Gastrocnemius medialis (tissue), 4 donors: ENCODE measurements at regions of chr3 and their contacts with region 1.

Region 1: DNA sequence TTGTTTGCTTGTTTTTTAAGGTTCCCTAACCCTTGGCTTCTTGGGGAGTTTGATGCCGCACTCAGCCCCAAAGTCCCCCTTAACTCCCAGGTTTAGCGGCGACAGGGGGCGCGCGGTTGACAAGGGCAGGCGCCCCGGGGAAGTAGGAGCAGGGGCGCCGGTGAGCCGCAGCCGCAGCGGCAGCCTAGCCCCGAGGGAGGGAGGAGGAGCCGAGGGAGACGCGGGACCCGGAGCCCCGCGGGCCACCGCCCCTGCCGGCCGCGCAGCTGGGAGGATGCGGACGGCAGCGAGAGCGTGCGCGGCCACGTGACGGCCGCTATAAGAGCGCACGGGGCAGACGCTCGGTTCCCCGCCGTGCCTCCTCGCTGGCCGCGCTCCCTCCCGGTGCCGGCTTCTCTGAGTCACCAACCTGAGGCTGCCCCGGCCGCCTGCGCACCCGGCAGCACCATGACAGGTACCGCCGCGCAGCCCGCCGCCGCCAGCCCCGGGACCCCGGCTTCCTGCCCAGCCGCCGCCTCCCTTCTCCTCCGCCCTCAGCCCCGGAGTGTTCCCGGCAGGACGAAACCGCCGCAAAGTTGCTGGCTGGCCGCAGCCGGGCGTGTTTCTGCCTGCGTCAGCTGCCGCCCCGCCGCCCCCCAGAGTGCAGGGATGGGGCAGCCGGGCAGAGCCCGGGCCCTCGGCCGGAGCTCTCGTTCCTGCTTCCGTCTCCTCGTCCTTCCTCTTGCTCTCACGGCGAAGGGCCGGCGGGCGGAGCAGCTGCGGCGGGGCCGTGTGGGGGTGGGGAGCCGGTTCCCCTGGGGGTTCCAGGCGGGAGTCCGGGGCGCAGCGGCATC is at the start of gene GYG1:
- DNase-seq: peak; percentile 81 to 89
- ATAC-seq: peak; percentile 74 to 75
- H3K4me3 ChIP-seq: peak within 1 kb of the TSS; percentile 77 to 99 (median 96)
- H3K27ac ChIP-seq: peak within 1 kb of the TSS; percentile 98 to 100 (median 100)
- H3K4me1 ChIP-seq: peaks cover 17 to 25% of the 10 kb centered on the region in 2 donors
- H3K27me3 ChIP-seq: no peaks in the 10 kb centered on the region
- CTCF ChIP-seq: peak in 4 of 5 experiments; percentile 23 to 53 (median 35)
- POLR2A ChIP-seq: peak; percentile 98 to 99
- total RNA-seq, gene GYG1: 298 to 526 (median 331) TPM

Region 2: DNA sequence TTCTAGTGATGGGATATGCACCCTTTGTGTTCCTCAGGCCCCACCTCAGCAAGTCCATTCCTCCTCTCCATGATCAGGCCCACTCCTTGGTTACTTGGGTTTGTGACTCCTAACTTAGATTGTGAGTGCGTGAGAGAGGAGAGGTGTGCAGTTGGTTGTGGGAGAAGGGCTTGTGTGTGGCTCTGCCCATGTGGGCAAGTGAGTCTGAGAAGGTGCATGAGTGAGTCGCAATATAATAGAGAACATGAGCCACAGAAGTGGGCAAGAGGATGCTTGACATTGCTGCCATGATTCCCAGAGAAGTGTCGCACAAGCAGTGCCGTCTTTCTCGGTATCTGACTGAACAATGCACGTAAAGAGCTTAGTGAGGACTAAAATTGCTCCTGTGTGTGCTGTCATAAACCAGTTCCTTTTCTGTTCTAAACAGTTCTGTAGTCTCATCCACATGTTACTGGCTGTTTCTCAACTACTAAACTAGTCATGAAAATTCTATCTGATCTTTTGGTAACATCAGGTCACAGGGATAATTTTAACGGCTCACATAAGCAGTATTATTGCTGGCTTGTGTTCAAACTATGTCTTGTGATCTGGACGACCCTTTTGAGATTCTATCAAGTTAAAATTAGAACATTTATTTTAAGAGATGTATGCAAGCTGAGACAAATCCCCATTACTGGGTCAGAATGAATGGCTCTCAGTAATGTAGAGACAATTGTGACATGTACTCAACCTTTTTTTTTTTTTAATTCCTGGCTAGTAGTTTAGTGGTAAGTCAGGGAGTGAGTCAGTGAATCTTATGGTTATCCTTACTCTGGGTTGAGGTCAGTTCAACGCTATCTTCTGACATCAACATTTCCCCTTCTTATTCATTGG is 25.5 kb after region 1 on chr3:
- in situ Hi-C with region 1: no loop called
- intact Hi-C with region 1: loop called (anchors 1 kb)
- DNase-seq: peak in 1 of 2 donors; percentile 45
- ATAC-seq: peak; percentile 73 to 76
- H3K4me3 ChIP-seq: peak overlapping the region in 1 of 4 donors; percentile 5
- H3K27ac ChIP-seq: peak overlapping the region; percentile 98 to 100 (median 100)
- H3K4me1 ChIP-seq: peaks cover 85 to 88% of the 10 kb centered on the region in 2 donors
- H3K27me3 ChIP-seq: no peaks in the 10 kb centered on the region
- CTCF ChIP-seq: no peak
- POLR2A ChIP-seq: peak in 1 of 2 donors; percentile 67

Region 3: GRCh38 chr3:149339931-149340309 is 348.5 kb after region 1 on chr3:
- in situ Hi-C with region 1: no loop called
- intact Hi-C with region 1: no loop called
- DNase-seq: peak; percentile 47 to 80
- ATAC-seq: peak; percentile 93 to 94
- H3K4me3 ChIP-seq: peak overlapping the region in 1 of 4 donors; percentile 1
- H3K27ac ChIP-seq: peak overlapping the region; percentile 63 to 81 (median 71)
- H3K4me1 ChIP-seq: peaks cover 0 to 22% of the 10 kb centered on the region in 2 donors
- H3K27me3 ChIP-seq: no peaks in the 10 kb centered on the region
- CTCF ChIP-seq: no peak
- POLR2A ChIP-seq: no peak